AG04450 (cell line): ENCODE measurements at regions of chr7 and their contacts with region 1.

Region 1: DNA sequence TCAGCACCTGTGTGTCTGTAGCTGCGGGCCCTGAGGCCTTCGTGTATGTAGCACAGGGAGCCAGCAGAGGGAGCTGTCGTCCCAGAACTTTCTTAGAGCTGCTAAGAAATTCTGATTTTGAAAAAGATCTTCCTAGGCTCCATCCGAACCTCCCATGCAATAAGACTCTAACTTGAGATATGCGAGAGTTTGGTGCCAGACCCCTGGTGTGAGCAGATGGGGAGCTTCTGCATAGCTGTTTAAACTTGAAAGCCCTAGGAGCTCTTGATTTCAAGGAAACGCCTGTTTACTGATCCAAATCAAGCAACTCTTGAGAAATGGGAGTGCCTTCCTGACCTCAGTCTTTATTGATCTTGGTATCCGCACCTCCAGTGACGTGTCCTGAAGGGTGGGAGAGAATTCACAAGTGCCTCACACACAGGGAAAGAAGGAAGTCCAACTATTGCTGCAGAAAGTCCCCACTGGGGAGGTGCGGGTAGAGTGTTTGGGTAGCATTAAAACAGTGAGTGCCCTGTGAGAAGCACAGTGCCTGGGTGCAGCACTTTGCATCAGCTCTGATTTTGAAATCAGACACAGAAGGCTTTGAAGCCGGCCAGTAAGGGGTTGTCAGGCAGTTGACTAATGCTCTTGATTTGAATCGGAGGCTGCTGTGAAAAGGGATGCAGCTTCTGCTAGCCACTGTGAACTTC is 66.4 kb upstream of the STRIP2 start:
- DNase-seq: no peak
- H3K4me3 ChIP-seq: no peak overlapping the region
- H3K27ac ChIP-seq: peak overlapping the region; percentile 3
- H3K27me3 ChIP-seq: no peaks in the 10 kb centered on the region
- CTCF ChIP-seq: peak; percentile 91

Region 2: GRCh38 chr7:129332284-129333035 is 35.4 kb before region 1 on chr7:
- CTCF ChIA-PET with region 1: interaction called, 11 read pairs
- POLR2A ChIA-PET with region 1: interaction called, 5 read pairs
- DNase-seq: peak; percentile 66
- H3K4me3 ChIP-seq: no peak overlapping the region; the same call in 1 of the 2 replicates
- H3K27ac ChIP-seq: peak overlapping the region; percentile 87
- H3K27me3 ChIP-seq: no peaks in the 10 kb centered on the region
- CTCF ChIP-seq: no peak

Region 3: GRCh38 chr7:129351320-129351719 is 16.5 kb before region 1 on chr7:
- CTCF ChIA-PET with region 1: interaction called, 14 read pairs
- POLR2A ChIA-PET with region 1: no interaction called
- DNase-seq: no peak
- H3K4me3 ChIP-seq: no peak overlapping the region
- H3K27ac ChIP-seq: peak overlapping the region; percentile 48
- H3K27me3 ChIP-seq: no peaks in the 10 kb centered on the region
- CTCF ChIP-seq: no peak

Region 4: DNA sequence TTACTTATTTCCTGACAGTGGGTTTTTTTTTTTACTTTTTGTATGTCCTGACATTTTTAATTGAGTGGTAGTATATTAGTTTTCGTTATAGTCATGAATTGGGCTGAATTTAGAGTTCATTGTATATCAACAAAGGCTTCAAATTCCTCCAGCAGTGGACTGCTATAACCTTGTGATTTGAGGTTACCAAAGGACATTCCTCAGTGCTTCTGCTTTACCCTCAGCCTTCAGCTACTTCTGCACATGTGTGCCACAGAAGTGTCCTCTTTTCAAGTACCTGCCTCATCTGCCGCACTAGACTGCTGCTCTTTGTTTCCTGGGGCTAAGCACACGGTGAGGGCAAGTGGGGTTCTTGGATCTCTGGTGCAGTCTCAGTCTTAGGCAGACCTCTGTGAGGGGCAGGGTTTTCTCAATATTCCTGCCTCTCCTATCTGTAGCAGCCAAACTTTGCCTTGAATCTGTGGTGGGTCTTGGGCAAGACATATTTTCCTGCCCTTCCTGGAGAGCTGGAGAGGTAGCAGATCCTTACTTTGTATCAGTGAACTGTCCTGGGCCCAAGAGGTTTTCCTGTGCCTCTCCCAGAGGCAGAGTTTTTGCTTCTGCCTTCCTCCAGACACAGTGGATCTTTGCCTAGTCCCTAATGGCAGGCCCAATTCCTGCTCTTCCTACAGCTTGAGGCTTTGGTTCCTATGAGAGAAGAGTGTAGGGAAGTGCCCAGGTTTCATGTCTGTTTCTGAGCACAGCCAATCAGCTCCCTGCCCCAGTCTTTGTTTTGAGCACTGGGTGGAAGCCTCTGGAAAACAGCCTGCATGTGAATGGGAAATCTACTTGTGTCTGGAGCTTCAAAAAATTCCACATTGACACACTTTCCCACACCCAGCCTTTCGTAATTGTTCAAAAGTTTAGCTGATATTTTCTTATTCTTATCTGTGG is 27.4 kb after region 1 on chr7:
- CTCF ChIA-PET with region 1: interaction called, 30 read pairs
- POLR2A ChIA-PET with region 1: interaction called, 4 read pairs
- DNase-seq: no peak
- H3K4me3 ChIP-seq: no peak overlapping the region
- H3K27ac ChIP-seq: no peak overlapping the region
- H3K27me3 ChIP-seq: no peaks in the 10 kb centered on the region
- CTCF ChIP-seq: no peak

Region 5: DNA sequence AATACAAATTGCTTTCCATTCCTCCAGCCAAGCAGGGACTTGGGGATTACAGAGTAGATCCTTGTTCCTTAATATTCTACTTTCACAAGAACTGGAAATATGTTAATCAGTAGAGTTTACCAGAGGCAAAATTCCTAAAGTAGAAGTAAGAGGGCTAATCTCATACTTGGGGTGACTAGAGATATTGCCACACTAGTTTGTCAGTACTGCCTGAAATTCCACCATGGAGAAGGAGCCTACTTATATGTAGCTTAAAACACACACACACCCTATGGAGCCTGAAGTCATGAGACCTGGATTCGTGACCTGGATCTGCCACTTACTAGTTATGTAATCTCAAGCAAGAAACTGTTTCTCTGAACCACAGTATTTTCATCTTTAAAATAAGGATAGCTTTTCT is 100.2 kb after region 1 on chr7:
- CTCF ChIA-PET with region 1: interaction called, 175 read pairs
- POLR2A ChIA-PET with region 1: no interaction called
- DNase-seq: peak; percentile 10
- H3K4me3 ChIP-seq: no peak overlapping the region
- H3K27ac ChIP-seq: no peak overlapping the region
- H3K27me3 ChIP-seq: no peaks in the 10 kb centered on the region
- CTCF ChIP-seq: no peak

Region 6: GRCh38 chr7:129644634-129645230 is 276.9 kb after region 1 on chr7:
- CTCF ChIA-PET with region 1: interaction called, 69 read pairs
- POLR2A ChIA-PET with region 1: interaction called, 4 read pairs
- DNase-seq: peak; percentile 20
- H3K4me3 ChIP-seq: no peak overlapping the region
- H3K27ac ChIP-seq: no peak overlapping the region
- H3K27me3 ChIP-seq: no peaks in the 10 kb centered on the region
- CTCF ChIP-seq: peak; percentile 58

Region 7: GRCh38 chr7:130305433-130306042 is 937.7 kb after region 1 on chr7:
- CTCF ChIA-PET with region 1: no interaction called
- POLR2A ChIA-PET with region 1: no interaction called
- DNase-seq: no peak
- H3K4me3 ChIP-seq: no peak overlapping the region
- H3K27ac ChIP-seq: no peak overlapping the region
- H3K27me3 ChIP-seq: no peaks in the 10 kb centered on the region
- CTCF ChIP-seq: no peak